ENCODE measurements at regions of chr20 and their contacts with region 1.

Region 1: GRCh38 chr20:35883778-35884540 is 70.3 kb downstream of the SCAND1 start:
- DNase-seq: peak; percentile 100
- H3K4me3 ChIP-seq: no peak overlapping the region
- H3K27ac ChIP-seq: peak overlapping the region; percentile 99
- H3K4me1 ChIP-seq: peaks cover 27% of the 10 kb centered on the region
- H3K27me3 ChIP-seq: no peaks in the 10 kb centered on the region
- CTCF ChIP-seq: peak; percentile 83 to 86

Region 2: GRCh38 chr20:35303735-35304491 is 580.0 kb before region 1 on chr20:
- CTCF ChIA-PET with region 1: no interaction called
- dilution Hi-C with region 1: no loop called
- in situ Hi-C with region 1: no loop called
- intact Hi-C with region 1: loop called (anchors 5 kb)
- DNase-seq: peak; percentile 89
- H3K4me3 ChIP-seq: no peak overlapping the region
- H3K27ac ChIP-seq: peak overlapping the region; percentile 95
- H3K4me1 ChIP-seq: peaks cover 74% of the 10 kb centered on the region
- H3K27me3 ChIP-seq: no peaks in the 10 kb centered on the region
- CTCF ChIP-seq: peak; percentile 88 to 97

Region 3: GRCh38 chr20:35511814-35512420 is 372.0 kb before region 1 on chr20:
- CTCF ChIA-PET with region 1: no interaction called
- dilution Hi-C with region 1: no loop called
- in situ Hi-C with region 1: no loop called
- intact Hi-C with region 1: loop called (anchors 1 kb)
- DNase-seq: peak; percentile 15
- H3K4me3 ChIP-seq: no peak overlapping the region
- H3K27ac ChIP-seq: no peak overlapping the region
- H3K4me1 ChIP-seq: peaks cover 18% of the 10 kb centered on the region
- H3K27me3 ChIP-seq: no peaks in the 10 kb centered on the region
- CTCF ChIP-seq: peak; percentile 49 to 69

Region 4: DNA sequence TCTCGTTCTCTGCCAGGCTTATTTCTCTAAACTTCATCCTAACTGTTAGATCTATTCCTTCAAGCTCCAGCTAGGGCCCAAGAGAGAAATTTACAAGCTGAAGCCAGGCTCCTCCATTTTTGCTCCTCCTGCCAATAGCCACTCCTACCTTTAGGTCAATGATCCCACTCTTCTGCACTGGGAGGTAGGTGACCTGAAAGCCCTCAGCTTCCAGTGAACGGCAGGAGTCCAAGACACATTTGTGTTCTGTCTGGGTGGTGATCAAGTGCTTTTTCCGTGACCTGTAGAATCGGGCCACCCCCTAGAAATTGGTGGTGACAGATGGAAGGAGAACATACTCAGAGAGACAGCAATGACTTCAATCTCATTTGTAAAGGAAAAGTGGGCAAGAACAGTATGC is 193.7 kb before region 1 on chr20:
- CTCF ChIA-PET with region 1: no interaction called
- dilution Hi-C with region 1: no loop called
- in situ Hi-C with region 1: no loop called
- intact Hi-C with region 1: loop called (anchors 1 kb)
- DNase-seq: no peak
- H3K4me3 ChIP-seq: no peak overlapping the region
- H3K27ac ChIP-seq: no peak overlapping the region
- H3K4me1 ChIP-seq: no peaks in the 10 kb centered on the region
- H3K27me3 ChIP-seq: no peaks in the 10 kb centered on the region
- CTCF ChIP-seq: no peak

Region 5: GRCh38 chr20:35741892-35742740 is 141.8 kb before region 1 on chr20 and contains the start of gene RBM39:
- CTCF ChIA-PET with region 1: interaction called, 6 read pairs
- dilution Hi-C with region 1: loop called (anchors 5 kb)
- in situ Hi-C with region 1: loop called in 1 of 2 experiments (anchors 5 kb)
- intact Hi-C with region 1: loop called (anchors 1 kb)
- DNase-seq: peak; percentile 100
- H3K4me3 ChIP-seq: peak within 1 kb of the TSS; percentile 78 to 93 (median 86)
- H3K27ac ChIP-seq: peak within 1 kb of the TSS; percentile 95
- H3K4me1 ChIP-seq: peaks cover 26% of the 10 kb centered on the region
- H3K27me3 ChIP-seq: no peaks in the 10 kb centered on the region
- CTCF ChIP-seq: peak in 1 of 2 donors; percentile 47
- total RNA-seq, gene RBM39: 188 to 283 TPM

Region 6: GRCh38 chr20:35791821-35792220 is 92.1 kb before region 1 on chr20:
- CTCF ChIA-PET with region 1: interaction called, 31 read pairs
- dilution Hi-C with region 1: no loop called
- in situ Hi-C with region 1: no loop called
- intact Hi-C with region 1: no loop called
- DNase-seq: peak; percentile 43
- H3K4me3 ChIP-seq: no peak overlapping the region
- H3K27ac ChIP-seq: no peak overlapping the region
- H3K4me1 ChIP-seq: no peaks in the 10 kb centered on the region
- H3K27me3 ChIP-seq: no peaks in the 10 kb centered on the region
- CTCF ChIP-seq: no peak

Region 7: GRCh38 chr20:35806075-35806474 is 77.9 kb before region 1 on chr20:
- CTCF ChIA-PET with region 1: no interaction called
- dilution Hi-C with region 1: no loop called
- in situ Hi-C with region 1: no loop called
- intact Hi-C with region 1: no loop called
- DNase-seq: no peak
- H3K4me3 ChIP-seq: no peak overlapping the region
- H3K27ac ChIP-seq: no peak overlapping the region
- H3K4me1 ChIP-seq: no peaks in the 10 kb centered on the region
- H3K27me3 ChIP-seq: no peaks in the 10 kb centered on the region
- CTCF ChIP-seq: no peak

Region 8: GRCh38 chr20:35871311-35871771 is 12.6 kb before region 1 on chr20:
- CTCF ChIA-PET with region 1: no interaction called
- dilution Hi-C with region 1: no loop called
- in situ Hi-C with region 1: no loop called
- intact Hi-C with region 1: loop called (anchors 1 kb)
- DNase-seq: peak; percentile 51
- H3K4me3 ChIP-seq: peak overlapping the region; percentile 7 to 45 (median 43)
- H3K27ac ChIP-seq: peak overlapping the region; percentile 77
- H3K4me1 ChIP-seq: peaks cover 32% of the 10 kb centered on the region
- H3K27me3 ChIP-seq: no peaks in the 10 kb centered on the region
- CTCF ChIP-seq: no peak

Region 9: DNA sequence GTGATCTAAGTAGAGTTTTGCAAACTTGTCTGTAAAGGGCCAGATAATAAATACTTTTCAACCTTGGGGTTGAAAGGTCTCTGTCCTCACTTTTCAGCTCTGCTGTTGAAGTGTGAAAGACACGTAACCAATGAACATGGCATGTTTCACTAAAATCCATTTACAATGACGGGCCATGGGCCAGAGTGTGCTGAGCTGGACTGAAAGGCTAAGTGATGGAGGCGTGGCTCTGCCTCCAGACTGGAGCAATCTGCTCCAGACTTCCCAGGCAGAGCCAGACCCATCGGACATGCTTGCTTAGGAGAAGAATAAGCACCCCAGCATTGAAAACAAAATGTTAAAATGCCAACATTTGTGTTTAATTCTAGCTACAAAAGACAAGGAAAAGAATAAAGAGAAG is 28.9 kb after region 1 on chr20:
- CTCF ChIA-PET with region 1: no interaction called
- dilution Hi-C with region 1: no loop called
- in situ Hi-C with region 1: no loop called
- intact Hi-C with region 1: no loop called
- DNase-seq: no peak
- H3K4me3 ChIP-seq: no peak overlapping the region
- H3K27ac ChIP-seq: no peak overlapping the region
- H3K4me1 ChIP-seq: no peaks in the 10 kb centered on the region
- H3K27me3 ChIP-seq: no peaks in the 10 kb centered on the region
- CTCF ChIP-seq: no peak

Region 10: GRCh38 chr20:35947489-35947888 is 63.5 kb after region 1 on chr20:
- CTCF ChIA-PET with region 1: no interaction called
- dilution Hi-C with region 1: no loop called
- in situ Hi-C with region 1: no loop called
- intact Hi-C with region 1: no loop called
- DNase-seq: peak; percentile 22
- H3K4me3 ChIP-seq: no peak overlapping the region
- H3K27ac ChIP-seq: no peak overlapping the region
- H3K4me1 ChIP-seq: peaks cover 2% of the 10 kb centered on the region
- H3K27me3 ChIP-seq: no peaks in the 10 kb centered on the region
- CTCF ChIP-seq: peak; percentile 54 to 57

Region 11: DNA sequence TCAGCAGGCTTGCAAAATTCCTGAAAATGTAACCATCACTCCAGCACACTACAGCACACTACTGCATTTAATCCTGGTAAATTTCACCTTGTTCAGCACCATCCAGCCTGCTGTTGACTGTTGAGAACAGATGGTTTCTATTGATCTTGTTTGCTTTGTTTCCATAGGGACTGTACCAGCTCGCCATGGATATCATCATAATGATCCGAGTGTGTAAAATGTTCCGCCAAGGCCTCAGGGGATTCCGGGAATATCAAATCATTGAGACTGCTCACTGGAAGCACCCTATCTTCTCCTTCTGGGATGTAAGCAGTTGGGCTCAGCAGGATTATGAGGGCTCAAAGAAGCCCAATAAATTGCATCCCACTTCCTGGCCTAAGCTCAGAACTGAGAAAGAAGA is 88.5 kb after region 1 on chr20:
- CTCF ChIA-PET with region 1: no interaction called
- dilution Hi-C with region 1: no loop called
- in situ Hi-C with region 1: no loop called
- intact Hi-C with region 1: no loop called
- DNase-seq: no peak
- H3K4me3 ChIP-seq: no peak overlapping the region
- H3K27ac ChIP-seq: no peak overlapping the region
- H3K4me1 ChIP-seq: peaks cover 6% of the 10 kb centered on the region
- H3K27me3 ChIP-seq: no peaks in the 10 kb centered on the region
- CTCF ChIP-seq: no peak